ENCODE measurements at regions of chr2 and their contacts with region 1.

Region 1: DNA sequence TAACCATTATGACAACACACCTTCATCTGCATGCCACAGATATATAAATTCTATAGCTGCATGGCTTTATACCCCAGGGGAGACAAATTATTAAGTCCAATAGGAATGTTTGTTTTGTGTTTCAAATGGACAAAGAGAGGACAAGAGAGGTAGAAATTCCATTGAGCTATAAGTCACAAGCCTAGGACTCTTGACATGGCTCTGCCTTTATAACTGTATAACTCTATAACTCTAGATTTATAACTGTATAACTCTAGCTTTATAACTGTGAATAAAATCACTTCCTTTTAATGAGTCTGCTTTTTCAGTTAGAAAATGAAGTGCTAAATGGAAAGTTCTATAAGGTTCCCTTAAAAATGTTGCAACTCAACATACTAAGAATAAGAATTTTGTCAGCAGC is 106.4 kb downstream of the SCN9A start:
- DNase-seq: no peak
- H3K4me3 ChIP-seq: no peak overlapping the region
- H3K27ac ChIP-seq: no peak overlapping the region
- H3K4me1 ChIP-seq: no peaks in the 10 kb centered on the region
- H3K27me3 ChIP-seq: no peaks in the 10 kb centered on the region
- CTCF ChIP-seq: no peak

Region 2: GRCh38 chr2:166256896-166257295 is 12.4 kb before region 1 on chr2:
- CTCF ChIA-PET with region 1: no interaction called
- dilution Hi-C with region 1: no loop called
- in situ Hi-C with region 1: no loop called
- intact Hi-C with region 1: loop called (anchors 1 kb)
- DNase-seq: no peak
- H3K4me3 ChIP-seq: no peak overlapping the region
- H3K27ac ChIP-seq: no peak overlapping the region
- H3K4me1 ChIP-seq: no peaks in the 10 kb centered on the region
- H3K27me3 ChIP-seq: no peaks in the 10 kb centered on the region
- CTCF ChIP-seq: no peak

Measured in mammary epithelial cell (primary cell).